Transverse colon (tissue), 4 donors: ENCODE measurements at regions of chr10 and their contacts with region 1.

Region 1: GRCh38 chr10:17643755-17644484 is at the start of gene STAM:
- DNase-seq: peak; percentile 91
- H3K4me3 ChIP-seq: peak within 1 kb of the TSS; percentile 63 to 94 (median 80)
- H3K27ac ChIP-seq: peak within 1 kb of the TSS; percentile 90 to 98 (median 96)
- H3K4me1 ChIP-seq: peaks cover 10 to 38% (median 26%) of the 10 kb centered on the region in 4 donors
- H3K27me3 ChIP-seq: no peaks in the 10 kb centered on the region
- CTCF ChIP-seq: no peak
- EP300 ChIP-seq: no peak
- POLR2A ChIP-seq: peak; percentile 78
- total RNA-seq, gene STAM: 1.9 to 18.4 (median 9.3) TPM

Region 2: DNA sequence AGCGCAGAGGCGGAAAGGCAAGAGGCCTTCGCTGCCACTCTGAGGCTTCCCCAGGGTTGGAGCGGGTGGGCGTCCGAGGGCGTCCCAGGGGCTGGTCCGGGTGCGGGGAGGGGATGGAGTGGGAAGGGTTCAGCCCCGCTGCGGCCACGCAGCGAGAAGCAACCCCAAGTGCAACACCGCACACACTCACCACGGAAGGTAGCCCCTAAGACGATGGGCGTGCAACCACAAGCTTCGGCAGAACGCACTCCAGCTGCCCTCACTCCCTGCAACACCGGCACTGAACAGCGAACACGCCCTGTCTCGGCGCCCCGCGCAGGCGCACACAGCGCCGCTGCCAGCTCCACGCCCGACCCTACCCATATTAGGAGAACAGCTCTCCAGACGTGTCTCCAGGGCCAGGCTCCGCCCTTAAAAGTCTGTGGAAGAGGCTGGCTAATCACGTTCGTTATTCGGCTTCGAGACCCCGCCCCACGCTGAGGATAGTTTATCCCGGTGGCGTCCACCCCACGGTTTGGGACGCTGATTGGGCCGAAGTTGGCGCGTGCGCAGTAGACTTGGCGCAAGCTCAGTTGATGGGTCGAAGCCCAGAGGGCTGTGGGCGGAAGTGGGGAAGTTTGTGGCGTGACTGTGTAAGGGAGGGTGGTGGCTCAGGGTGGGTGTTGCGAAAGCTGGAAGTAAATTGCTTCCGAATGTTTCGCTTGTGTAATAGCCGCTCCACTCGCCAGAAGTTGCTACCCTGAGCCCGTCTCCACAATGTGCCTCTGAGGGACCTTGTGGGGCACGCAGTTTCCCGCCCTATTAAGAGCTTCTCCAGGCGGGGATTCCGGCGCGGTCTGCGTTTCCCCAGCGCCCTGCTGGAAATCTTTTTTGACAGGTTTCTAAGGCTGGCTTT is 826.5 kb before region 1 on chr10 and contains the start of gene RSU1:
- in situ Hi-C with region 1: loop called in 1 of 4 experiments (anchors 25 kb)
- intact Hi-C with region 1: no loop called
- DNase-seq: peak; percentile 100
- H3K4me3 ChIP-seq: peak within 1 kb of the TSS; percentile 62 to 80 (median 70)
- H3K27ac ChIP-seq: peak within 1 kb of the TSS; percentile 87 to 95 (median 94)
- H3K4me1 ChIP-seq: peaks cover 10 to 36% (median 14%) of the 10 kb centered on the region in 4 donors
- H3K27me3 ChIP-seq: no peaks in the 10 kb centered on the region
- CTCF ChIP-seq: peak in 1 of 5 experiments; percentile 5
- EP300 ChIP-seq: peak; percentile 2
- POLR2A ChIP-seq: peak; percentile 78
- total RNA-seq, gene RSU1: 25.9 to 132 (median 67.0) TPM

Region 3: GRCh38 chr10:18104223-18104872 is 460.4 kb after region 1 on chr10:
- in situ Hi-C with region 1: loop called in 1 of 4 experiments (anchors 25 kb)
- intact Hi-C with region 1: no loop called
- DNase-seq: peak; percentile 56
- H3K4me3 ChIP-seq: no peak overlapping the region
- H3K27ac ChIP-seq: no peak overlapping the region
- H3K4me1 ChIP-seq: no peaks in the 10 kb centered on the region
- H3K27me3 ChIP-seq: no peaks in the 10 kb centered on the region
- CTCF ChIP-seq: peak; percentile 55 to 73 (median 64)
- EP300 ChIP-seq: no peak
- POLR2A ChIP-seq: no peak